A549 (cell line): ENCODE measurements at regions of chr15 and their contacts with region 1.

Region 1: GRCh38 chr15:91879148-91879547 is 25.6 kb downstream of the SLCO3A1 start:
- DNase-seq: no peak
- ATAC-seq: no peak
- H3K4me3 ChIP-seq: no peak overlapping the region
- H3K27ac ChIP-seq: no peak overlapping the region
- H3K4me1 ChIP-seq: no peaks in the 10 kb centered on the region
- CTCF ChIP-seq: no peak
- EP300 ChIP-seq: no peak
- POLR2A ChIP-seq: no peak
- RAD21 ChIP-seq: no peak

Region 2: DNA sequence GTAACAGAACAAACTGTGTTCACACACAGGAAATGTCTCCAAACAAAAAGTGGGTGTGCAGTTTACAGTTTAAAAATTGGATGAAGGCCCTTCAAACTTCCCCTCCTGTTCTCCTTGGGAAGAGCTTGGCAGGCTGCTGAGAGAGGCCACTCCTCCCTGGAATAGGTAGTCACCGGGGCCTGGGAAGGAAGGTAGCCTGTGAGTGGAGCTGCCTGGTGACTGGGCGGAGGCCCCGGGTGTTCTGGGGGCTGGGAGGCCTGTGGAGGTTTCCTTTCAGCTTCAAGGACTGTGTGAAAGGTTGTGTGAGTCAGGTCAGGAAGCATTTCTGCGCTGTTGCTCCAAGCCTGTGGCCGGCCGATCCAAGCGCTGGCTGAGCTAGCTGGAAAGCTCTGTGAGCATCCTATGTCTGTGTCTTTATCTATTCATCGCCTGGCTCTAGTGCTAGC is 11.5 kb before region 1 on chr15:
- CTCF ChIA-PET with region 1: interaction called, 10 read pairs
- POLR2A ChIA-PET with region 1: no interaction called
- DNase-seq: peak; percentile 73 to 78
- ATAC-seq: peak; percentile 98 to 99
- H3K4me3 ChIP-seq: no peak overlapping the region
- H3K27ac ChIP-seq: peak overlapping the region; percentile 40 to 79
- H3K4me1 ChIP-seq: peaks cover 28% of the 10 kb centered on the region
- CTCF ChIP-seq: no peak
- EP300 ChIP-seq: no peak
- POLR2A ChIP-seq: no peak
- RAD21 ChIP-seq: no peak